ENCODE measurements at regions of chr19 and their contacts with region 1.

Region 1: GRCh38 chr19:21396893-21397572 is at the start of gene ZNF493:
- DNase-seq: peak; percentile 90 to 97
- ATAC-seq: peak; percentile 100
- H3K4me3 ChIP-seq: peak within 1 kb of the TSS; percentile 50 to 94 (median 76)
- H3K27ac ChIP-seq: peak within 1 kb of the TSS; percentile 24 to 93 (median 86)
- H3K4me1 ChIP-seq: peaks cover 0 to 44% (median 27%) of the 10 kb centered on the region in 9 donors
- H3K27me3 ChIP-seq: no peaks in the 10 kb centered on the region
- CTCF ChIP-seq: no peak
- total RNA-seq, gene ZNF493: 8.2 to 13.9 (median 10.5) TPM

Region 2: GRCh38 chr19:21328885-21329605 is 68.0 kb before region 1 on chr19 and contains the start of gene ZNF708:
- intact Hi-C with region 1: loop called in 1 of 10 experiments (anchors 2 kb)
- DNase-seq: peak; percentile 85 to 93
- ATAC-seq: peak; percentile 100
- H3K4me3 ChIP-seq: peak within 1 kb of the TSS; percentile 63 to 91 (median 82)
- H3K27ac ChIP-seq: peak within 1 kb of the TSS; percentile 90 to 99 (median 97)
- H3K4me1 ChIP-seq: peaks cover 0 to 23% (median 19%) of the 10 kb centered on the region in 9 donors
- H3K27me3 ChIP-seq: no peaks in the 10 kb centered on the region
- CTCF ChIP-seq: no peak
- total RNA-seq, gene ZNF708: 4.1 to 5.7 (median 4.9) TPM

Region 3: DNA sequence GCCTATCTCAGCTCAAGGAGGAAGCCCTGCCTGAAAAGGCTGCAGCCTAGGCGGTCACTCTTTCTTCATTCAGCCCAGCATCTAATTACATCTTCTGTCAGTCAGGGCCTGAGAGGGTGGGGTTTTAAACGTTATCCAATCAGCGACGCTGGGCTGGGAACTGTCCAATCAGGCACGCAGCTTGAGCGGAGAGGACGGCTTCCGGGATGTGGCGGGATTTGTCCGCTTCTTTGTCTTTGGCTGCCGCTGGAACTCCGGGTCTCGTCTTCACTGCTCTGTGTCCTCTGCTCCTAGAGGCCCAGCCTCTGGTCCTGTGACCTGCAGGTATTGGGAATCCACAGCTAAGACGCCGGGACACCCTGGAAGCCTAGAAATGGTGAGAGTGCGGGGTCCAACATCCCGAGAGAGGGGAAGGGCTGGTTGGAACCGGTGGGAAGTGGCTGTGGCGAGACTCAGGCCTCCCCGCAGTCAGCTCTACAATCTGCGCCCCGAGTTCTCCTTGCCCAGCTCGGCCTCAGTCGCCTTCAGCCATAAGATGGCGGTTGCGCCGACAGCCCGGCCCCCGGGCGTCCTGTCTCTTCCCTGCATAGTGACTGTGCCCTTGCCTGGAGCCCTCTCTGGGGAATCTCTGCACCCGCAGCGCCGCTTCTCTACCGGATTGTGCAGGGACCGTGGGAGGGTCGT is 38.1 kb before region 1 on chr19 and contains the start of gene ZNF738:
- intact Hi-C with region 1: loop called in 1 of 10 experiments (anchors 5 kb)
- DNase-seq: peak; percentile 89 to 95
- ATAC-seq: peak; percentile 99 to 100 (median 99)
- H3K4me3 ChIP-seq: peak within 1 kb of the TSS; percentile 44 to 98 (median 72)
- H3K27ac ChIP-seq: peak within 1 kb of the TSS in 9 of 10 donors; percentile 41 to 86 (median 75)
- H3K4me1 ChIP-seq: peaks cover 0 to 11% (median 3%) of the 10 kb centered on the region in 9 donors
- H3K27me3 ChIP-seq: no peaks in the 10 kb centered on the region
- CTCF ChIP-seq: peak in 2 of 9 donors; percentile 5 to 9
- total RNA-seq, gene ZNF738: 0.93 to 4.4 (median 2.3) TPM

Region 4: DNA sequence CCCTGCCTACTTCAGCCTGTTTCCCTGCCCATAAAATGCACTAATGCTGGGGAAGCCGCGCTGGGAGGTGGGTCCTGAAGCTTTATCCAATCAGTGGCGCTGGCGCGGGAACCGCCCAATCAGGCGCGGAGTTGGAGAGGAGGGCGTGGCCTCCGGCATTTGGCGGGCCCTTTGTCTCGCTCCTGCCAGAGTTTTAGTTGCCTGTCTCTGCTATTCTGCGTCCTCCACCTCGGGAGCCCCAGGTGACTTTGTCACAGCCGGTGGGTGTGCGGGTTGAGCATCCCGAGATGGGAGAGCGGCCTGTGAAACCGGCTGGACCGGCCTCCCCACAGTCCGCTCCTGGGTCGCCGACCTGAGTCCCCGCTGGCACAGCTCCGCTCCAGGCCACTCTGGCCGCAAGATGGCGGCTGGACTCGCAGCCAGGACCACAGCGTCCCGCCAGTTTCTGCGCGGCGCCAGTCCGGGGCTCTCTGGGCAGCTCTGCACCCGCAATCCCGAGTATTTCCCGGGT is 77.7 kb after region 1 on chr19:
- intact Hi-C with region 1: loop called in 1 of 10 experiments (anchors 5 kb)
- DNase-seq: peak; percentile 80 to 86
- ATAC-seq: peak; percentile 97 to 100 (median 99)
- H3K4me3 ChIP-seq: peak overlapping the region; percentile 8 to 70 (median 58)
- H3K27ac ChIP-seq: no peak overlapping the region
- H3K4me1 ChIP-seq: peaks cover 0 to 13% (median 6%) of the 10 kb centered on the region in 9 donors
- H3K27me3 ChIP-seq: peaks cover 0 to 11% (median 0%) of the 10 kb centered on the region in 7 donors
- CTCF ChIP-seq: peak in 4 of 9 donors; percentile 16 to 35 (median 23)

Measured in heart right ventricle (tissue), 16 donors.